ENCODE measurements at regions of chr14 and their contacts with region 1.

Region 1: GRCh38 chr14:81170104-81170828 is 50.5 kb downstream of the GTF2A1 start:
- DNase-seq: peak; percentile 90 to 92 (median 91)
- H3K4me3 ChIP-seq: peak overlapping the region; percentile 47 to 94
- H3K4me3 Mint-ChIP-seq: peak overlapping the region; percentile 89 to 96 (median 92)
- H3K27ac ChIP-seq: peak overlapping the region; percentile 55
- H3K27ac Mint-ChIP-seq: peak overlapping the region; percentile 81 to 98 (median 94)
- H3K4me1 ChIP-seq: peaks cover 16% of the 10 kb centered on the region
- H3K4me1 Mint-ChIP-seq: peaks cover 16 to 30% (median 22%) of the 10 kb centered on the region in 4 donors
- H3K27me3 ChIP-seq: no peaks in the 10 kb centered on the region
- H3K27me3 Mint-ChIP-seq: no peaks in the 10 kb centered on the region

Region 2: DNA sequence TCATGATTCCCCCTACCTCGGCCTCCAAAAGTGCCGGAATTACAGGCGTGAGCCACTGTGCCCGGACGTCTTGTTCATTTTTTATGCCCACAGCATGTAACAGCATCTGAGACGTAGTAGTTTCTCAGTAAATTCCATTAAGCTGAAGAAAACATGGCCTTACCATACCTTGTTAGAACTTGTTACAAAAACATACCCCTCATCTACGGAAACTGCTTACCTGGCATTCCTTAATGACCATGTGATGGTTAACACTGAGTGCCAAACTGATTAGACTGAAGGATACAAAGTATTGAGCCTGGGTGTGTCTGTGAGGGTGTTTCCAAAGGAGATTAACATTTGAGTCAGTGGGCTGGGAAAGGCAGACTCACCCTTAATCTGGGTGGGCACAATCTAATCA is 415.6 kb before region 1 on chr14:
- CTCF ChIA-PET with region 1: no interaction called
- POLR2A ChIA-PET with region 1: no interaction called
- intact Hi-C with region 1: no loop called
- DNase-seq: no peak
- H3K4me3 ChIP-seq: no peak overlapping the region
- H3K4me3 Mint-ChIP-seq: no peak overlapping the region
- H3K27ac ChIP-seq: no peak overlapping the region
- H3K27ac Mint-ChIP-seq: no peak overlapping the region
- H3K4me1 ChIP-seq: no peaks in the 10 kb centered on the region
- H3K4me1 Mint-ChIP-seq: no peaks in the 10 kb centered on the region
- H3K27me3 ChIP-seq: no peaks in the 10 kb centered on the region
- H3K27me3 Mint-ChIP-seq: no peaks in the 10 kb centered on the region

Region 3: GRCh38 chr14:80930836-80931389 is 239.4 kb before region 1 on chr14:
- CTCF ChIA-PET with region 1: no interaction called
- POLR2A ChIA-PET with region 1: interaction called, 3 read pairs
- intact Hi-C with region 1: loop called (anchors 1 kb)
- DNase-seq: peak; percentile 78 to 89 (median 85)
- H3K4me3 ChIP-seq: no peak overlapping the region
- H3K4me3 Mint-ChIP-seq: peak overlapping the region; percentile 57 to 82 (median 68)
- H3K27ac ChIP-seq: peak overlapping the region; percentile 38
- H3K27ac Mint-ChIP-seq: peak overlapping the region; percentile 82 to 96 (median 93)
- H3K4me1 ChIP-seq: peaks cover 31% of the 10 kb centered on the region
- H3K4me1 Mint-ChIP-seq: peaks cover 39 to 62% (median 45%) of the 10 kb centered on the region in 4 donors
- H3K27me3 ChIP-seq: no peaks in the 10 kb centered on the region
- H3K27me3 Mint-ChIP-seq: no peaks in the 10 kb centered on the region

Region 4: DNA sequence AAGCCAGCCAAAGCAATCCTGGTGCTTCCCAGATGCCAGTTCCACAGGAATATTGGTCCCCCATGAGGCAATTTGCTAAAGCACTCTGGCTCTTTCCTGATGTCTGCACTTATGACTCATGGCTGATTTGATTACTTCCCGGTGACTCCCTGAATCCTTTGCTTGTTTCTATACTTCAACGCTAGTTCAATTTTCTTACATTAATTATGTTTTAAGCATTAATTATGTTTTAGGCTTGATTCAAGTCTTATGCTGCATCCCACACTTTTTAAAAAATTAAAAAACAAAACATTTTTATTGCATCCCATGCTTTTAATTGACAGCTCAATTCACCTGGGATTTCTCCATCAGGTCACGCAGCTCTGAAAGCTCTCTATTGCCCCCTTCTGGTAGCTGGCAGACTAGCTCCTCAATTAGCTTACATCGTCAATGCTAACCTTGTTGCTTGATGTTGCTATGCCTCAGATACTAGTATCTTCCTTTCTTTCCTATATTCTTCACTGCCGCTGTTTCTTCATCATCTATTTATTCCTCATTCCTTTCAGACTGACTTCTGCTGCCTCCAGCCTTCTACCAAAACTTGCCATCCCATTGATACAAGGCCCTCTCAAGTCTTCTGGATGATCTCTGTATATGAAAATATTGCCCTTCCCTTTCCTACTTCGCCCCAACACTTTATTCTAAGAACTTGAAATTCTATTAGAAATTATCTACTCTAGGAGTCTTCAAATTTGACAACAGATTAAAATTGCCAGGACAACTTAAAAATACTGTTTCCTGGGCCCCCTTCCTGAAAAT is 182.8 kb before region 1 on chr14:
- CTCF ChIA-PET with region 1: interaction called, 38 read pairs
- POLR2A ChIA-PET with region 1: interaction called, 4 read pairs
- intact Hi-C with region 1: no loop called
- DNase-seq: peak; percentile 62 to 71 (median 68)
- H3K4me3 ChIP-seq: no peak overlapping the region
- H3K4me3 Mint-ChIP-seq: no peak overlapping the region
- H3K27ac ChIP-seq: no peak overlapping the region
- H3K27ac Mint-ChIP-seq: no peak overlapping the region
- H3K4me1 ChIP-seq: no peaks in the 10 kb centered on the region
- H3K4me1 Mint-ChIP-seq: no peaks in the 10 kb centered on the region
- H3K27me3 ChIP-seq: no peaks in the 10 kb centered on the region
- H3K27me3 Mint-ChIP-seq: peaks cover 2 to 9% of the 10 kb centered on the region in 2 donors

Region 5: GRCh38 chr14:80996049-80996901 is 174.0 kb before region 1 on chr14:
- CTCF ChIA-PET with region 1: interaction called, 47 read pairs
- POLR2A ChIA-PET with region 1: interaction called, 12 read pairs
- intact Hi-C with region 1: loop called (anchors 1 kb)
- DNase-seq: peak; percentile 38 to 47 (median 44)
- H3K4me3 ChIP-seq: no peak overlapping the region
- H3K4me3 Mint-ChIP-seq: no peak overlapping the region
- H3K27ac ChIP-seq: no peak overlapping the region
- H3K27ac Mint-ChIP-seq: peak overlapping the region in 1 of 7 donors; percentile 0
- H3K4me1 ChIP-seq: no peaks in the 10 kb centered on the region
- H3K4me1 Mint-ChIP-seq: peaks cover 3 to 9% (median 6%) of the 10 kb centered on the region in 4 donors
- H3K27me3 ChIP-seq: no peaks in the 10 kb centered on the region
- H3K27me3 Mint-ChIP-seq: peaks cover 14 to 15% of the 10 kb centered on the region in 2 donors

Region 6: DNA sequence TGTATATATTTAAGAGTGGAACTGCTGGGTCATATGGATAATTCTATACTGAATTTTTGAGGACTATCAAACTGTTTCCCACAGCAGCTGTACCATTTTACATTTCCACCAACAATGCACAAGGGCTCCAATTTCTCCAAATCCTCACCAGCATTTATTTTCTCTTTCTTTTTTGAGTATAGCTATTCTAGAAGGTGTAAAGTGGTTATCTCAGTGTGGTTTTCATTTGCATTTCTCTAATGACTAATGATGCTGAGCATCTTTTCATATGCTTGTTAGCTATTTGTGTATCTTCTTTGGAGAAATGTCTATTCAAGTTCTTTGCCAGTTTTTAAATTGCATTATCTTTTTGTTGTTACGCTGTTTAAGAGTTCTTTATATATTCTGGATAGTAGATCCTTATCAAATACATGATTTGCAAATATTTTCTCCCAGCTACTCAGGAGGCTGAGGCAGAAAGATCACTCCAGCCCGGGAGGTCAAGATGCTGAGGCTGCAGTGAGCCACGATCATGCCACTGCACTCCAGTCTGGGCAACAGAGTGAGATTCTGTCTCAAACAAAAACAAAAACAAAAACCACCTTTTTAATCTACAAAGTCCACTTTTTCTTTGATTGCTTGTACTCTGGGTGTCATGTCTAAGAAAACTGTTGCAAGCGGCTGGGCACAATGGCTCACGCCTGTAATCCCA is 17.7 kb after region 1 on chr14:
- CTCF ChIA-PET with region 1: interaction called, 16 read pairs
- POLR2A ChIA-PET with region 1: interaction called, 5 read pairs
- intact Hi-C with region 1: no loop called
- DNase-seq: no peak
- H3K4me3 ChIP-seq: no peak overlapping the region
- H3K4me3 Mint-ChIP-seq: no peak overlapping the region
- H3K27ac ChIP-seq: no peak overlapping the region
- H3K27ac Mint-ChIP-seq: peak overlapping the region in 4 of 7 donors; percentile 1 to 81 (median 53)
- H3K4me1 ChIP-seq: peaks cover 43% of the 10 kb centered on the region
- H3K4me1 Mint-ChIP-seq: peaks cover 32 to 45% (median 38%) of the 10 kb centered on the region in 4 donors
- H3K27me3 ChIP-seq: no peaks in the 10 kb centered on the region
- H3K27me3 Mint-ChIP-seq: no peaks in the 10 kb centered on the region

Region 7: DNA sequence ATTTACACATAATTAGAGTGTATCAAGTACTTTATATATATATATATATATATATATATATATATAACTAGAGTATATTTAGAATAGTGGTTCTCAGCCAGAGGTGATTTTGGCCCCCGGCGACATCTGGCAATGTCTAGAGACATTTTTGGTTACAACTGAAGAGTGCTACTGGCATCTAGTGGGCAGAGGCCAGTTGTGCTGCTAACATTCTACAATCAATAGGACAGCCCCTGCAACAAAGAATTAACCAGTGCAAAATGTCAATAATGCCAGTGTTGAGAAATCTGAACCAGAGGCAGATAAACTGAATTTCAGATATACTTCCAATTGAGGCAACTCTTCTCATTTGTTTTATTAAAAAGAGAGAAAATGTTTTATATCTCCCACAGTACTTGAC is 41.6 kb after region 1 on chr14:
- CTCF ChIA-PET with region 1: interaction called, 15 read pairs
- POLR2A ChIA-PET with region 1: interaction called, 26 read pairs
- intact Hi-C with region 1: no loop called
- DNase-seq: peak; percentile 20 to 48 (median 26)
- H3K4me3 ChIP-seq: no peak overlapping the region
- H3K4me3 Mint-ChIP-seq: no peak overlapping the region
- H3K27ac ChIP-seq: no peak overlapping the region
- H3K27ac Mint-ChIP-seq: peak overlapping the region in 3 of 7 donors; percentile 20 to 49 (median 37)
- H3K4me1 ChIP-seq: peaks cover 23% of the 10 kb centered on the region
- H3K4me1 Mint-ChIP-seq: peaks cover 35 to 69% (median 44%) of the 10 kb centered on the region in 4 donors
- H3K27me3 ChIP-seq: no peaks in the 10 kb centered on the region
- H3K27me3 Mint-ChIP-seq: no peaks in the 10 kb centered on the region

Region 8: GRCh38 chr14:81256289-81256960 is 86.2 kb after region 1 on chr14:
- CTCF ChIA-PET with region 1: no interaction called
- POLR2A ChIA-PET with region 1: no interaction called
- intact Hi-C with region 1: no loop called
- DNase-seq: no peak
- H3K4me3 ChIP-seq: no peak overlapping the region
- H3K4me3 Mint-ChIP-seq: no peak overlapping the region
- H3K27ac ChIP-seq: no peak overlapping the region
- H3K27ac Mint-ChIP-seq: peak overlapping the region in 1 of 7 donors; percentile 12
- H3K4me1 ChIP-seq: no peaks in the 10 kb centered on the region
- H3K4me1 Mint-ChIP-seq: no peaks in the 10 kb centered on the region
- H3K27me3 ChIP-seq: no peaks in the 10 kb centered on the region
- H3K27me3 Mint-ChIP-seq: peaks cover 11 to 17% of the 10 kb centered on the region in 2 donors

Region 9: GRCh38 chr14:81464247-81465002 is 294.2 kb after region 1 on chr14:
- CTCF ChIA-PET with region 1: interaction called, 4 read pairs
- POLR2A ChIA-PET with region 1: no interaction called
- intact Hi-C with region 1: loop called (anchors 5 kb)
- DNase-seq: peak; percentile 59 to 79 (median 77)
- H3K4me3 ChIP-seq: peak overlapping the region; percentile 51 to 67
- H3K4me3 Mint-ChIP-seq: peak overlapping the region; percentile 84 to 89 (median 84)
- H3K27ac ChIP-seq: peak overlapping the region; percentile 60
- H3K27ac Mint-ChIP-seq: peak overlapping the region; percentile 68 to 91 (median 86)
- H3K4me1 ChIP-seq: no peaks in the 10 kb centered on the region
- H3K4me1 Mint-ChIP-seq: peaks cover 0 to 9% (median 4%) of the 10 kb centered on the region in 4 donors
- H3K27me3 ChIP-seq: no peaks in the 10 kb centered on the region
- H3K27me3 Mint-ChIP-seq: peaks cover 0 to under 1% of the 10 kb centered on the region in 2 donors

Measured in CD4-positive, alpha-beta memory T cell (primary cell).